ENCODE measurements at regions of chr10 and their contacts with region 1.

Region 1: GRCh38 chr10:18659120-18659818 is at the start of gene ARL5B:
- DNase-seq: peak; percentile 99
- ATAC-seq: peak; percentile 98
- H3K4me3 ChIP-seq: peak within 1 kb of the TSS; percentile 95
- H3K27ac ChIP-seq: peak within 1 kb of the TSS; percentile 90
- H3K4me1 ChIP-seq: no peaks in the 10 kb centered on the region; the same call in 1 of the 2 replicates
- H3K27me3 ChIP-seq: no peaks in the 10 kb centered on the region
- CTCF ChIP-seq: no peak
- POLR2A ChIP-seq: peak; percentile 97
- RAD21 ChIP-seq: no peak
- total RNA-seq, gene ARL5B: 12.0 and 32.8 TPM in 2 replicates

Region 2: DNA sequence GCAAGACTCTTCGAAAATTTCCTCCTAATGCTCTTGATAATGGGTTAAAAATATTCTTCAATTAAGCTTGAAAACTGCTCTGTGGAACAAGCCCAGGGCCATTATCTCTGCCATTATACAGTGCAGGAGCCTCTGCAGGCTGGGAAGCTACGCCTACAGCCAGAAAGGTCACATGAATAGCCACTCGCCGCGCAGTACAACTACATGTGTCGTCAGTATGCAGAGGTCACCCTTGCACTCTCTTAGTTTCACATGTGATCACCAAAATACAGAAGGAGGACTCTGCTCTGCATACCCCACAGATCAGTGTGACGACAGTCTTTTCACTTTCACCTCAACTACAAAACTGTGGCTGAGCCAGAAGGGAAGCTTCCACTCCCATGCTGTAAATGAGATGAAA is 1995.8 kb before region 1 on chr10:
- CTCF ChIA-PET with region 1: no interaction called
- POLR2A ChIA-PET with region 1: interaction called, 10 read pairs
- dilution Hi-C with region 1: no loop called
- in situ Hi-C with region 1: no loop called
- intact Hi-C with region 1: no loop called
- DNase-seq: no peak
- ATAC-seq: no peak
- H3K4me3 ChIP-seq: no peak overlapping the region
- H3K27ac ChIP-seq: no peak overlapping the region
- H3K4me1 ChIP-seq: no peaks in the 10 kb centered on the region
- H3K27me3 ChIP-seq: no peaks in the 10 kb centered on the region
- CTCF ChIP-seq: no peak
- POLR2A ChIP-seq: no peak
- RAD21 ChIP-seq: no peak

Region 3: GRCh38 chr10:16761300-16761699 is 1898.0 kb before region 1 on chr10:
- CTCF ChIA-PET with region 1: no interaction called
- POLR2A ChIA-PET with region 1: interaction called, 14 read pairs
- dilution Hi-C with region 1: no loop called
- in situ Hi-C with region 1: no loop called
- intact Hi-C with region 1: no loop called
- DNase-seq: no peak
- ATAC-seq: no peak
- H3K4me3 ChIP-seq: no peak overlapping the region
- H3K27ac ChIP-seq: no peak overlapping the region
- H3K4me1 ChIP-seq: peaks cover 1% of the 10 kb centered on the region; the same call in 1 of the 2 replicates
- H3K27me3 ChIP-seq: no peaks in the 10 kb centered on the region
- CTCF ChIP-seq: no peak
- POLR2A ChIP-seq: no peak
- RAD21 ChIP-seq: no peak

Region 4: GRCh38 chr10:18381679-18382078 is 277.6 kb before region 1 on chr10:
- CTCF ChIA-PET with region 1: no interaction called
- POLR2A ChIA-PET with region 1: interaction called, 11 read pairs
- dilution Hi-C with region 1: no loop called
- in situ Hi-C with region 1: no loop called
- intact Hi-C with region 1: no loop called
- DNase-seq: no peak
- ATAC-seq: no peak
- H3K4me3 ChIP-seq: no peak overlapping the region
- H3K27ac ChIP-seq: no peak overlapping the region
- H3K4me1 ChIP-seq: no peaks in the 10 kb centered on the region
- H3K27me3 ChIP-seq: no peaks in the 10 kb centered on the region
- CTCF ChIP-seq: no peak
- POLR2A ChIP-seq: no peak
- RAD21 ChIP-seq: no peak

Region 5: DNA sequence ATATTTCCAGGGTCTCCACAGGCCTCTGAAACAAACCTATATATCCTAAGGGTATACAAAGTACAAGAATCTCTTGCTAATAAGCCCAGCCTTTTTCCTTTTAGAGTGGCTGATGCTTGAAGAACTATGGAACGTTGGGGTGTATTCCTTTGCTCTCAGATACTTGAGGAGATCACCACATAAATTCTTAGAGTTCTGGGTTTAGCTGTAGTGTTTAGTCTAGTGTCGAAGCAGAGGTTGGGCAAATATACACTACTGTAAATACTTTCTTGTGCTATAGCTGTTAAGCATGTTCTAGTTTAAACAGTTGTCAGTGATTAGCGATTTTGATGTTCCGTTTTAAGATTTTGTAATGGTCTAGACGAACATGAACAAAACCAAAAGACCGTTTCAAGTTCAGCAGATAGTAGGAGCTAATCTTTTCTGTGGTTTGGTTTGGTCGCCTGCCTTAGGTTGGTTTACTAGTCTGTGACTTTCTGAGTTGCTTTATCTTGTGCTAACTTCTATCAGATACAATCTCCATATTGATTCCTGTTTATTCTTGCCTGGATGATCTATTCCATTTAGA is 237.5 kb before region 1 on chr10:
- CTCF ChIA-PET with region 1: interaction called, 3 read pairs
- POLR2A ChIA-PET with region 1: no interaction called
- dilution Hi-C with region 1: no loop called
- in situ Hi-C with region 1: no loop called
- intact Hi-C with region 1: loop called (anchors 2 kb)
- DNase-seq: peak; percentile 74
- ATAC-seq: peak; percentile 80
- H3K4me3 ChIP-seq: no peak overlapping the region
- H3K27ac ChIP-seq: peak overlapping the region; percentile 64; the same call in 1 of the 2 replicates
- H3K4me1 ChIP-seq: peaks cover 7% of the 10 kb centered on the region; the same call in 1 of the 2 replicates
- H3K27me3 ChIP-seq: no peaks in the 10 kb centered on the region
- CTCF ChIP-seq: no peak
- POLR2A ChIP-seq: no peak
- RAD21 ChIP-seq: no peak

Region 6: DNA sequence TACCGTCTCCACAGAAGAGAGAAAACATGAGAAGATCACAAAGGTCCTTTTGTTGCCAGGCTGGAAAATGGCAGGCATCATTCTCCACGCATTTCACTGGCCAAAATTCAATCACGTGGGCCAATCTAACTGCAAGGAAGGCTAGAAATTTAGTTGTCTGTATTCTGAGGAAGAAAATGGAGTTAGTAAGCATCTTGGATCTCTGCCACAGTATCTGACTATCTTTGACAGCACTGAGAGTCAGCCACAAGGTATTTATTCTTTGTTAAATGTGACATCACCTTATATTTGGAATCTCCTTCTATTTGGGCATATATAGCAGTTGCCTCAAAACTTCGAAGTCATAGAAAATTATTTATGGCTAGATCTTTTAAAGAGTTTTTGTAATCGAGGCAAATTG is 221.8 kb before region 1 on chr10:
- CTCF ChIA-PET with region 1: no interaction called
- POLR2A ChIA-PET with region 1: no interaction called
- dilution Hi-C with region 1: no loop called
- in situ Hi-C with region 1: no loop called
- intact Hi-C with region 1: no loop called
- DNase-seq: peak; percentile 58
- ATAC-seq: no peak
- H3K4me3 ChIP-seq: no peak overlapping the region
- H3K27ac ChIP-seq: no peak overlapping the region
- H3K4me1 ChIP-seq: peaks cover 2% of the 10 kb centered on the region; the same call in 1 of the 2 replicates
- H3K27me3 ChIP-seq: no peaks in the 10 kb centered on the region
- CTCF ChIP-seq: no peak
- POLR2A ChIP-seq: no peak
- RAD21 ChIP-seq: no peak